ENCODE measurements at regions of chr2 and their contacts with region 1.

Region 1: GRCh38 chr2:69798909-69799526 is 30.4 kb upstream of the GMCL1 start:
- DNase-seq: peak; percentile 77
- H3K4me3 ChIP-seq: peak overlapping the region in 2 of 3 experiments; percentile 2 to 61
- H3K27ac ChIP-seq: peak overlapping the region; percentile 69
- H3K4me1 ChIP-seq: peaks cover 20% of the 10 kb centered on the region
- H3K27me3 ChIP-seq: no peaks in the 10 kb centered on the region
- CTCF ChIP-seq: no peak
- POLR2A ChIP-seq: no peak

Region 2: GRCh38 chr2:70190418-70191243 is 391.6 kb after region 1 on chr2 and contains the start of gene C2orf42:
- CTCF ChIA-PET with region 1: no interaction called
- POLR2A ChIA-PET with region 1: interaction called, 10 read pairs
- dilution Hi-C with region 1: no loop called
- intact Hi-C with region 1: no loop called
- DNase-seq: peak; percentile 98
- H3K4me3 ChIP-seq: peak within 1 kb of the TSS; percentile 52 to 73 (median 60)
- H3K27ac ChIP-seq: peak within 1 kb of the TSS; percentile 67
- H3K4me1 ChIP-seq: no peaks in the 10 kb centered on the region
- H3K27me3 ChIP-seq: no peaks in the 10 kb centered on the region
- CTCF ChIP-seq: peak in 1 of 2 donors; percentile 23
- POLR2A ChIP-seq: peak; percentile 98
- total RNA-seq, gene C2orf42: 12.0 and 13.1 TPM in 2 replicates

Measured in endothelial cell of umbilical vein (primary cell).